HepG2 (cell line): ENCODE measurements at regions of chr17 and their contacts with region 1.

Region 1: DNA sequence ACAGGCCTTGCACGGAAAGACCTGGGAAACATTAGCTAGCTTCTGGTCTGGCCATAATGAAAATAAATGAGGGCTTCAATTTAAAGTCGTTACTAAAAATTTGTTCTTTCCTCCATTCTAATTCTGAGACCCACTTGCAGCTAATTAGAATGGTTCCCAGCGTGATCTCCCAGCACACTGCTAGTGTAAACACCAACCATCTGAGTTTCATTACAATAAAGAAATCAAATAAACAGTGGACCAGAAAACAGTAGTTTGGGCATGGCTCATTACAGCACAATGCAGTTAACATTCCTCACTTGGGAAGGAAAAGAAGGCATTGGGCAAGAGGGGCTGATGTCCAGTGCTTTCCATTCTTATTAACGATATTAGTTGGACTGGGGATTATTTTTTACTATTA is 410.9 kb upstream of the SOX9 start:
- DNase-seq: no peak
- ATAC-seq: no peak
- H3K4me3 ChIP-seq: no peak overlapping the region
- H3K27ac ChIP-seq: no peak overlapping the region
- H3K4me1 ChIP-seq: peaks cover 12% of the 10 kb centered on the region
- H3K27me3 ChIP-seq: no peaks in the 10 kb centered on the region
- CTCF ChIP-seq: no peak
- EP300 ChIP-seq: no peak
- POLR2A ChIP-seq: no peak
- RAD21 ChIP-seq: no peak

Region 2: GRCh38 chr17:69916761-69917160 is 1793.2 kb before region 1 on chr17:
- CTCF ChIA-PET with region 1: no interaction called
- POLR2A ChIA-PET with region 1: no interaction called
- in situ Hi-C with region 1: no loop called
- intact Hi-C with region 1: loop called (anchors 5 kb)
- DNase-seq: no peak
- ATAC-seq: no peak
- H3K4me3 ChIP-seq: no peak overlapping the region
- H3K27ac ChIP-seq: no peak overlapping the region
- H3K4me1 ChIP-seq: no peaks in the 10 kb centered on the region
- H3K27me3 ChIP-seq: no peaks in the 10 kb centered on the region
- CTCF ChIP-seq: no peak
- EP300 ChIP-seq: no peak
- POLR2A ChIP-seq: no peak
- RAD21 ChIP-seq: no peak

Region 3: DNA sequence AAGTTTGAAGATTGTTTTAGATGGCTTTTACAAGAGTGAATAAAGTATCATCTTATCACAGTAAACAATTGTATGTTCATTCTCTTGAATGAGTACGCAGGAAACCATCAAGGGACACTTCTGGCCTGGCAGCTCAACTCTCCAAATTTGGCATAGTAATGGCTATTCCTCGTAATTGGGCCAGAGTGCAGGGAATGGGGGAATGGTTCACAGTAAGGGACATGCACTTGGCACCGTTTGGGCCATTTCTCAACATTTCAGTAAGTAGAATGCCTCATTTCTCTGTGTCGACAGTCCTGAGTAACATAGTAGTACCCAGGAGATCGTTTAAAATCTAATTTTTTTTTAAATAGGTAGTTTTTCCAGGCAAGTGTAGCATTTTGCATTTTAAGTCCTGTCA is 1231.0 kb before region 1 on chr17:
- CTCF ChIA-PET with region 1: no interaction called
- POLR2A ChIA-PET with region 1: no interaction called
- in situ Hi-C with region 1: no loop called
- intact Hi-C with region 1: loop called (anchors 10 kb)
- DNase-seq: no peak
- ATAC-seq: no peak
- H3K4me3 ChIP-seq: no peak overlapping the region
- H3K27ac ChIP-seq: no peak overlapping the region
- H3K4me1 ChIP-seq: no peaks in the 10 kb centered on the region
- H3K27me3 ChIP-seq: no peaks in the 10 kb centered on the region
- CTCF ChIP-seq: no peak
- EP300 ChIP-seq: no peak
- POLR2A ChIP-seq: no peak
- RAD21 ChIP-seq: no peak

Region 4: DNA sequence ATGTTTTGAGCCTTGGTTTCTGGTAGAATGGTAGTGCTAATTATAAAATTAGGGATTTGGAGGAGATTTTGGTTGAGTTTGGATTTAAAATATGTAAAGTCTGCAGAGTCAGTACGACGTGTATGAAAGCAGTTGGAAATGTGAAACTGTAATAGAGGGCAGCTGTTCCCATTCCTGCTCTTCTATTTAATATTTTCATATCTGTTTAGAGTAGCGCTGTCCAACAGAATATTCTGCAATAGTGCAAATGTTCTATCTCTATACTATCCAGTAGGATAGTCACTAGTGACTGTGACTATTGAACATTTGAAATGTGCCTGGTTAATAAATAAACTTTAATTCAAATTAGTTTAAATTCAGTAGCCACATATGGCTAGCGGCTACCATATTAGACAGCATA is 32.5 kb before region 1 on chr17:
- CTCF ChIA-PET with region 1: no interaction called
- POLR2A ChIA-PET with region 1: no interaction called
- in situ Hi-C with region 1: no loop called
- intact Hi-C with region 1: loop called (anchors 1 kb)
- DNase-seq: no peak
- ATAC-seq: no peak
- H3K4me3 ChIP-seq: no peak overlapping the region
- H3K27ac ChIP-seq: no peak overlapping the region
- H3K4me1 ChIP-seq: peaks cover 29% of the 10 kb centered on the region
- H3K27me3 ChIP-seq: no peaks in the 10 kb centered on the region
- CTCF ChIP-seq: no peak
- EP300 ChIP-seq: no peak
- POLR2A ChIP-seq: no peak
- RAD21 ChIP-seq: no peak